Left lung (tissue), 14 donors: ENCODE measurements at regions of chr18 and their contacts with region 1.

Region 1: DNA sequence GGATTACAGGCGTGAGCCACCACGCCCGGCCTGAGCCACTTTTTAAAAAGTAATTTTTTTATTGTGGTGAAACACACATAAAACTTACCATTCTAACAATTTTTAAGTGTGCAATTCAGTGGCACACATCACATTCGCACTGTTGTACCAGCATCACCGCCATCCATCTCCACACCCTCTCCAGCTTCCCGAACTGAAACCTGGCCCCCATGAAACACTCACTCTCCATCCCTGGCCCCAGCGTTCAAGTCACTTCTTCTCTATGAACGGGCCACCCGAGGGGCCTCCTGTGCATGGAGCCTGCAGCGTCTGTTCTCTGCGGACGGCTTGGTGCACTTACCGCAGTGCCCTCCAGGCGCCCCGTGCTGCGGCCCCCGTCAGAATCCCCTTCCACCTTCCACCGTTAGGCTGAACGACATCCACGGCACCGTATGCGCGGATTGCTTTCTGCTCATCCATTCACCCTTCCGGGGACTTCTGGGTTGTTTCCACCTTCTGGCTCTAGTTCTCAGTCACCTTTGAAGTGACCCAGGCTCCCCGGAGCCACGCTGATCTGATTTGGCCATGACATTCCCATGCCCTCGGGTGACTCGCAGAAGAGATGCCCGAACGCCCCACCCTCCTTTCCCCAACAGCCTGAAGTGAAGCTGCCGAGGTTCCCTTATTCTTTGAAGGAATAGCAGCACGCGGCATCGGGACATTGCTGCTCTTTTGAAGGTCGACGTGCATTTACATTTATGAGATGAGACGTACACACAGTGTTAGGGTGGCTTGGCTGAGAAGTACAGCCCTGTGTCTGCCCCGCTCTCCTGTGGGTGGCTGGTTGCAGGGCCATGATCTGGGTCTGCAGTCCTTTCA is 134.4 kb downstream of the MBP start:
- DNase-seq: peak in 1 of 4 donors; percentile 51
- ATAC-seq: no peak
- H3K4me3 ChIP-seq: no peak overlapping the region
- H3K27ac ChIP-seq: no peak overlapping the region
- H3K4me1 ChIP-seq: peaks cover 0 to 7% of the 10 kb centered on the region in 2 donors
- H3K27me3 ChIP-seq: no peaks in the 10 kb centered on the region
- CTCF ChIP-seq: no peak

Region 2: GRCh38 chr18:77210249-77210648 is 212.1 kb after region 1 on chr18:
- intact Hi-C with region 1: loop called in 1 of 2 experiments (anchors 5 kb)
- DNase-seq: peak in 1 of 4 donors; percentile 69
- ATAC-seq: no peak
- H3K4me3 ChIP-seq: no peak overlapping the region
- H3K27ac ChIP-seq: no peak overlapping the region
- H3K4me1 ChIP-seq: peaks cover 6 to 42% of the 10 kb centered on the region in 2 donors
- H3K27me3 ChIP-seq: no peaks in the 10 kb centered on the region
- CTCF ChIP-seq: no peak